Mammary epithelial cell (primary cell): ENCODE measurements at regions of chr15 and their contacts with region 1.

Region 1: DNA sequence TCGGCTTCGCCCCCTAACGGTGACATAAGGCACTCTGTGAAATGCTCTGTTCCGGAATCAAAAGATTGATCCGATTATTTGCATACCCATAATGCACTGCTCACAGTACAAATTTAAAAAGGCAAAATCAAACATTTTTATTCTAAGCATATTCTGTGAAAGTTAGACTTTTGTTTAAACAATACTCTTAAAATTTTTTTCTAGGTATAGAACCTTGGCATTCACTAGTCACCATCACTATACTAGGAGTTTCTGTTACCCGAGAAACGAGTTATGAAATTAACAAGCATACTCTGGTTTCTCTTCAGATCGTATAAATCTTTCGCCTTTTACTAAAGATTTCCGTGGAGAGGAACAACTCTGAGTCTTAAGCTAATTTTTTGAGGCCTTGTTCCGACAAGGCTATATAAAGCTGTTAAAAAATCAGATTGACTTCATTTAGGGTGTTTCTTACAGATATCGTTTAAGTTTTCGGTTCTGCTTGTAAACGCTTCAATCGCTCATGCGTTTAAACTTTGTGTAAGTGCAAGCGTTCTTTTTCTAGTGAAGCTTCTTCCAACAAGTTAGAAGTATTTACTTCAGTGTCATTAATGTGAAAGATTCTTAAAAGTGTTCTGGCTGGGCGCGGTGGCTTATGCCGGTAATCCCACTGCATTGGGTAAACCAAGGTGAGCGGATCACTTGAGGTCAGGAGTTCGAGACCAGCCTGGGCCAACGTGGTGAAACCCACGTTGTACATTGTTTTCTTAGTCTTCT is at the start of gene RNU5B-1:
- DNase-seq: peak; percentile 70
- H3K4me3 ChIP-seq: peak within 1 kb of the TSS; percentile 40 to 90 (median 45)
- H3K27ac ChIP-seq: peak within 1 kb of the TSS; percentile 100
- H3K4me1 ChIP-seq: peaks cover 14% of the 10 kb centered on the region
- H3K27me3 ChIP-seq: no peaks in the 10 kb centered on the region
- CTCF ChIP-seq: peak; percentile 87 to 94
- total RNA-seq, gene RNU5B-1: not detected

Region 2: GRCh38 chr15:65286704-65287519 is 17.7 kb before region 1 on chr15 and contains the start of gene PARP16:
- CTCF ChIA-PET with region 1: no interaction called
- dilution Hi-C with region 1: no loop called
- in situ Hi-C with region 1: no loop called
- intact Hi-C with region 1: loop called (anchors 1 kb)
- DNase-seq: peak; percentile 83
- H3K4me3 ChIP-seq: peak within 1 kb of the TSS; percentile 57 to 78 (median 59)
- H3K27ac ChIP-seq: peak within 1 kb of the TSS; percentile 28
- H3K4me1 ChIP-seq: peaks cover 16% of the 10 kb centered on the region
- H3K27me3 ChIP-seq: no peaks in the 10 kb centered on the region
- CTCF ChIP-seq: peak in 1 of 2 donors; percentile 34
- total RNA-seq, gene PARP16: 4.9 to 5.2 TPM

Region 3: DNA sequence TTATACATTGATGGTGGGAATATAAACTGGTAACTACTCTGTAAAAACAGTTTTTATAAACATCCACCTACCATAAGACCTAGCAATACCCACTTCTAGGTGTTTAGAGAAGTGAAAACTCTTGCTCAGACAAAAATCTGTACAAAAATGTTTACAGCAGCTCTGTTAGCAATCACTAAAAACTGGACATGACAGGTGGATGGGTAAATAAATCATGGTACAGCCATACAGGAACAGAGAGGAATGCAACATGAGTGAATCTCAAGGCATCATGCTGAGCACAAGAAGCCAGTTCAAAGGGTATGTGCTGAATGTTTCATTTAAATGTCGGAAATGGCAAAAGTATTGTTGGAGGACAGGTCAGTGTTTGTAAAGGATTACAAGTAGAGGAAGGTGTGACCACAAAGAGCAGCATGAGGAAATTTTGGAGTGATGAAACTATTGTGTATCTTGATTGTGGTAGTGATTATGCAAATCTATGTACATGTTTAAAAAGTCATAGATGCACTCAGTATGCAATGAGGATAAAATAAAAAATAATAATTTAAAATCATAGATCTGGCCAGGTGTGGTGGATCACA is 11.5 kb before region 1 on chr15:
- CTCF ChIA-PET with region 1: no interaction called
- dilution Hi-C with region 1: no loop called
- in situ Hi-C with region 1: no loop called
- intact Hi-C with region 1: loop called (anchors 1 kb)
- DNase-seq: no peak
- H3K4me3 ChIP-seq: no peak overlapping the region
- H3K27ac ChIP-seq: no peak overlapping the region
- H3K4me1 ChIP-seq: peaks cover 3% of the 10 kb centered on the region
- H3K27me3 ChIP-seq: no peaks in the 10 kb centered on the region
- CTCF ChIP-seq: no peak